ENCODE measurements at regions of chr4 and their contacts with region 1.

Region 1: DNA sequence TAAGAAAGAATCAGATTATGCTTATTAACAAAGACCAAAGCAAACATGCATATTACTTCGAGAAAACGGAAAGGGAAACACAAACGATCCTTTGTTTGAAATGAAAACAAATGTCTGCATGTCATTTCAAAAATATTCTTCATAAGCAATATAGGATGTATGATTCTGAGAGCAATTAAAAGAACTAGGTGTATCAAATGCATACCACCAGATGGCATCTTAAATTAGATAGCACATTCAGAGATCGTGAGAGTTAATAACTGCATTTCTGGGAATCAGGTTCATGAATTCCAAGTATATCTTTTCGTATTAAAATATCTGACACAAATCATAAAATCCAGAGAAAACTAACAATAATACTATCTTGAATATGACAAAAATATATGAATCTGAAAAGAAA is 159.5 kb downstream of the PPP3CA start:
- DNase-seq: no peak
- H3K4me3 Mint-ChIP-seq: no peak overlapping the region
- H3K27ac Mint-ChIP-seq: no peak overlapping the region
- H3K4me1 Mint-ChIP-seq: peaks cover 18% of the 10 kb centered on the region
- H3K27me3 Mint-ChIP-seq: no peaks in the 10 kb centered on the region
- CTCF ChIP-seq: peak; percentile 15

Region 2: DNA sequence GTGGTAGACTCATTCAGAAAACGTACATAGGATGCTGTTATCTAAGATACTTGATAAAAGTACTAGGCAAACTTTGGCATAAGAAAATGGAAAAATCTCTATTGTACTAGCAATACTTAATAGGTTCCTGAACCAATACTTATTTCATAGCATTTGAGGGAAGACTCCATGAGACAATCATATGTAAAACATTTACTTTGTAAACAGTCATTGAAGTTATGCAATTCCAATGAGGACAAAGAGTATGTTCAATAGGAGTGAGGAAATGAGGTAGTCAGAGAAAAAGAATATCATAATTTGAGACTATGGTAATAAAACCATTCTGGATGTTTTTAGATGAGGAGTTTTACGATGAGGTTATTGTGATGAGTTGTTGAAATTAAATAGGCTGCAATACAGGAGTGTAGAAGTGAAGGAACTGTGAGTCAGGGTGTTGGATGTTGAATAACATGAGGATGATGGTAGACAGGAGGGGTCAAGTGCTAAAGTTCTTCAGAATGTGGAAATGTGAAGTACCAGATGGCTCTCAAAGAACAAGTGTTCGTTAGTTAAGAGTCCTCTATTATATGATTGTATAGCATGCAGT is 238.4 kb before region 1 on chr4:
- CTCF ChIA-PET with region 1: no interaction called
- intact Hi-C with region 1: no loop called
- DNase-seq: no peak
- H3K4me3 Mint-ChIP-seq: no peak overlapping the region
- H3K27ac Mint-ChIP-seq: no peak overlapping the region
- H3K4me1 Mint-ChIP-seq: no peaks in the 10 kb centered on the region
- H3K27me3 Mint-ChIP-seq: no peaks in the 10 kb centered on the region
- CTCF ChIP-seq: no peak

Region 3: GRCh38 chr4:100962698-100963097 is 225.1 kb before region 1 on chr4:
- CTCF ChIA-PET with region 1: no interaction called
- intact Hi-C with region 1: no loop called
- DNase-seq: no peak
- H3K4me3 Mint-ChIP-seq: no peak overlapping the region
- H3K27ac Mint-ChIP-seq: no peak overlapping the region
- H3K4me1 Mint-ChIP-seq: no peaks in the 10 kb centered on the region
- H3K27me3 Mint-ChIP-seq: no peaks in the 10 kb centered on the region
- CTCF ChIP-seq: no peak

Region 4: DNA sequence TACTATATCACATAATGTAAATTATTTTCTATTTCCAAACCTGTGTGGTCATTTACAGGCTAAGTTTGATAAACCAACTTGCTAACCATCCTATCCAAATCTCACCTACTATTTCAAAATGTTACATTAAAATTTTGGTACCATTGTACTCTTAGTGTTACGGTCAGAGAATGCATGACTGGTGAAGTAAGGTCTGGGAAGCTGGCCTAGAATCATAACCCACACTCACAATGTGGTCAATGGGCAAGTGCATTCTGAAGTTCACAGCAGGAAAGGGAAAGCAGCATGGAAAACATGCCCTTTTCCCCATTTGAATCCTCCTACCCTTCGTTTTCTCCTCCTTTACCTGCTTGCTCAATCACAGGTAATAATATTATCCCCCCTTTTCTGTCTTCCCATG is 105.1 kb after region 1 on chr4:
- CTCF ChIA-PET with region 1: no interaction called
- intact Hi-C with region 1: no loop called
- DNase-seq: no peak
- H3K4me3 Mint-ChIP-seq: no peak overlapping the region
- H3K27ac Mint-ChIP-seq: no peak overlapping the region
- H3K4me1 Mint-ChIP-seq: peaks cover 38% of the 10 kb centered on the region
- H3K27me3 Mint-ChIP-seq: no peaks in the 10 kb centered on the region
- CTCF ChIP-seq: no peak

Region 5: DNA sequence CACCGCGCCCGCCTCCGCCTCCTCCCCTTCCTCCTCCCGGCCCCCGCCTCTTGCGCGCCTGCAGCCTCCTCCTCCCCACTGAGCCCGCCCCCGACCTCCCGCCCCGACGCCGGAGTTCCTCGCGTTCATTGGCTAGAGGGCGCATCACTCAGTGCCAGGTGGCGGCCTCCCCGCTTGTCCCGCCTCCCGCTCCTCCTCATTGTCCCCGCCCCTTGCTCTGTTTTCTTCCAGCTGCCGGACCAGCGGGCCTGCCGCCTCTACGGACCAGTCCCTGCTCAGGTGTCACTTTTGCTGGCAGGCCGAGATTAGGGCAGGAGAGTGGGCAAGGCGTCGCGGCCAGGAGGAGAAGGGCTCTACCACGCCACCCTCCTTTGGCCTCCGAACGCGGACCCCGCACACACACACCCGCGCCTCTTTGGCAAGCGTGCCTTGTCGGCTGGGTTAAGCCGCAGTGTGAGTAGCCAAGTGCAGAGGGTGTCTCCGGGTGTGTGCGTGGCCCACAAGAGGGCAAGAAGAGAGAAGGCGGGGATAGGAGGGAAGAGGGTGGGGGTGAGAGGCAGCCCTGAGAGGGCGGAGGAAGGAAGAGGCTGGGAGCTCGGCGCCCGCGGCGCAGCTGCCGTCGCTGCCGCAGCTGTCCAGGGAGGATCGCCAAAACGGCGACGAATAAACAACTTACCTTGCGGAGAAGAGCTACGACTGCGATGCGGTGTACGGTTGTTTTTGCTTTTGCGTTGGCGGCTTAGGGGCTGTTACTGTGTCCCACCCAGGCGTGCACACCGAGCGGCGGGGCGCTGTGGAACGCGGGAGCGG is 159.9 kb after region 1 on chr4:
- CTCF ChIA-PET with region 1: no interaction called
- intact Hi-C with region 1: loop called (anchors 5 kb)
- DNase-seq: peak; percentile 95
- H3K4me3 Mint-ChIP-seq: peak overlapping the region; percentile 99
- H3K27ac Mint-ChIP-seq: peak overlapping the region; percentile 84
- H3K4me1 Mint-ChIP-seq: peaks cover 44% of the 10 kb centered on the region
- H3K27me3 Mint-ChIP-seq: no peaks in the 10 kb centered on the region
- CTCF ChIP-seq: no peak